ENCODE measurements at regions of chr3 and their contacts with region 1.

Region 1: GRCh38 chr3:98921957-98922356 is 20.5 kb upstream of the DCBLD2 start:
- DNase-seq: no peak

Region 2: GRCh38 chr3:97871801-97872524 is 1050.0 kb before region 1 on chr3:
- intact Hi-C with region 1: no loop called
- DNase-seq: no peak

Region 3: GRCh38 chr3:98812851-98813374 is 109.0 kb before region 1 on chr3:
- intact Hi-C with region 1: no loop called
- DNase-seq: no peak

Region 4: DNA sequence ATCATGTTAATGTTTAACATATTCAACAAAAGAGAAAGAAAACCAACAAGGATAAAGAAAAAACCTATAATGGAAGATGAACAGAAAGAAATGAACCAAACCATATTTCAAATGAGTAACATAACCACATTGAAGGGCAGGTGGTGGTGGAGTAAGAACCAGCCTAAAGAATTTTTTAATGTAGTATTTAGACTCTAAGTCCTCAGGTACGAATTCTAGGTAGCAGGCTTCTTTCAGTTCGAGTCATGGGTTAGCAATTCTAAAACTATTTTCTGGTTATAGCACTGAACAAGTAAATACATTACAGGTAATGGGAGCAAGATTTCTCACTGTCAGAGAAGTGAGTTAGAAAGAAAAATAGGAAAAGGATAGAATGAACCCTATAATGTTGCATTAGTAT is 44.8 kb before region 1 on chr3:
- intact Hi-C with region 1: loop called in 1 of 2 experiments (anchors 2 kb)
- DNase-seq: no peak

Region 5: DNA sequence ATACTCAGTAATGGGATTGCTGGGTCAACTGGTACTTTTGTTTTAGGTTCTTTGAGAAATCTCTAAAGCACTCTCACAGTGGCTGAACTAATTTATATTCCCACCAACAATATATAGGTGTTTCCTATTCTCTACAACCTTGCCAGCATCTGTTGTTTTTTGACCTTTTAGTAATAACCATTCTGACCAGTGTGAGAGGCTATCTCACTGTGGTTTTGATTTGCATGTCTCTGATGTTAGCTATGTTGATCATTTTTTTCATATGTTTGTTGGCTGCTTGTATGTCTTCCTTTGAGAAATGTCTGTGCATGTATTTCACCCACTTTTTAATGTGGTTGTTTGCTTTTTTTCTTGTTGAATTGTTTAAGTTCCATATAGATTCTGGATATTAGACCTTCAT is 77.7 kb after region 1 on chr3:
- intact Hi-C with region 1: no loop called
- DNase-seq: no peak

Region 6: DNA sequence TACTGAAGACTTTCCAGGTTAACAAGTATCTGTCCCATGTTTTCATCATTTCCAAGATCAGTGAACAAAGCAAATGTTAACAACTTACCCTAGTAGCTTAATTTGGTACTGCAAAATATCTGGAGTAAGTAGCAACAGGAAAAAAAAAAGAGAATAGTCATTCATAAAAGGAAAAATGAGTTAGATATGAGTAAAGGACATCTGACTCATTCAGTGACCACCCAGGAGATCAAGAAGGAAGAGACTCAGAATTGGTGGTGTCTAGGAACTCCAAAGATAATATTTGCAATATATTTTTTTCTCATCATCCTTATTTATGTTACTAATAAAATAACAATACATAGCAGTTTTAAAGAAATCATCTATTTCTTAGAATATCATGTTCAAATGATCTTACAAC is 462.6 kb after region 1 on chr3:
- intact Hi-C with region 1: no loop called
- DNase-seq: no peak